Prostate gland (tissue), 2 donors: ENCODE measurements at regions of chr4 and their contacts with region 1.

Region 1: GRCh38 chr4:73662709-73663546 is 42.7 kb upstream of the RASSF6 start:
- DNase-seq: no peak
- H3K4me3 ChIP-seq: no peak overlapping the region
- H3K27ac ChIP-seq: no peak overlapping the region
- H3K4me1 ChIP-seq: no peaks in the 10 kb centered on the region
- H3K27me3 ChIP-seq: no peaks in the 10 kb centered on the region
- CTCF ChIP-seq: peak; percentile 28 to 73 (median 56)
- POLR2A ChIP-seq: no peak

Region 2: DNA sequence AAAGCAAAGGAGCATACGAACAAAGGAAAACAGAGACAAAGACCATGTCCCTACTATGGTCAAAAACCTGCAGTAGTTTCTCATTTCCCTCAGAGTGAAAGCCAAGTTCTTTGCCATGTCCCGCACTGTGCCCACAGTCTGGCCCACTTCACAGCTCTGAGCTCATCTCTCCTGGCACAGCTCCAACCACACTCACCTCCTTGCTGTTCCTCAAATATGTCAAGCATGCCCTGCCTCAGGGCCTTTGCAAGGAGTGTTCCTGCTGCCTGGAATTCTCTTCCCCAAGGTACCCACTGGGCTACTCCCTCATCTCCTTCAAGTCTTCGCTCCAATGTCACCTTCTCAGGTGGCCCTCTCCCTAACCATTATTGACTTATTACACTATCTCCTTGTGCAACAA is 665.5 kb before region 1 on chr4:
- intact Hi-C with region 1: no loop called
- DNase-seq: no peak
- H3K4me3 ChIP-seq: no peak overlapping the region
- H3K27ac ChIP-seq: no peak overlapping the region
- H3K4me1 ChIP-seq: no peaks in the 10 kb centered on the region
- H3K27me3 ChIP-seq: no peaks in the 10 kb centered on the region
- CTCF ChIP-seq: no peak
- POLR2A ChIP-seq: no peak

Region 3: GRCh38 chr4:73477176-73477575 is 185.8 kb before region 1 on chr4:
- intact Hi-C with region 1: no loop called
- DNase-seq: no peak
- H3K4me3 ChIP-seq: no peak overlapping the region
- H3K27ac ChIP-seq: no peak overlapping the region
- H3K4me1 ChIP-seq: no peaks in the 10 kb centered on the region
- H3K27me3 ChIP-seq: no peaks in the 10 kb centered on the region
- CTCF ChIP-seq: no peak
- POLR2A ChIP-seq: no peak

Region 4: GRCh38 chr4:73869130-73870050 is 206.5 kb after region 1 on chr4 and contains the start of gene CXCL1:
- intact Hi-C with region 1: loop called (anchors 10 kb)
- DNase-seq: peak; percentile 13
- H3K4me3 ChIP-seq: peak within 1 kb of the TSS; percentile 49 to 50
- H3K27ac ChIP-seq: peak within 1 kb of the TSS; percentile 20 to 55
- H3K4me1 ChIP-seq: no peaks in the 10 kb centered on the region
- H3K27me3 ChIP-seq: no peaks in the 10 kb centered on the region
- CTCF ChIP-seq: no peak
- POLR2A ChIP-seq: no peak
- total RNA-seq, gene CXCL1: 0.74 to 37.1 TPM

Region 5: GRCh38 chr4:73922766-73923630 is 260.1 kb after region 1 on chr4:
- intact Hi-C with region 1: loop called (anchors 5 kb)
- DNase-seq: no peak
- H3K4me3 ChIP-seq: no peak overlapping the region
- H3K27ac ChIP-seq: no peak overlapping the region
- H3K4me1 ChIP-seq: no peaks in the 10 kb centered on the region
- H3K27me3 ChIP-seq: no peaks in the 10 kb centered on the region
- CTCF ChIP-seq: peak in 3 of 4 experiments; percentile 22 to 57 (median 46)
- POLR2A ChIP-seq: no peak

Region 6: DNA sequence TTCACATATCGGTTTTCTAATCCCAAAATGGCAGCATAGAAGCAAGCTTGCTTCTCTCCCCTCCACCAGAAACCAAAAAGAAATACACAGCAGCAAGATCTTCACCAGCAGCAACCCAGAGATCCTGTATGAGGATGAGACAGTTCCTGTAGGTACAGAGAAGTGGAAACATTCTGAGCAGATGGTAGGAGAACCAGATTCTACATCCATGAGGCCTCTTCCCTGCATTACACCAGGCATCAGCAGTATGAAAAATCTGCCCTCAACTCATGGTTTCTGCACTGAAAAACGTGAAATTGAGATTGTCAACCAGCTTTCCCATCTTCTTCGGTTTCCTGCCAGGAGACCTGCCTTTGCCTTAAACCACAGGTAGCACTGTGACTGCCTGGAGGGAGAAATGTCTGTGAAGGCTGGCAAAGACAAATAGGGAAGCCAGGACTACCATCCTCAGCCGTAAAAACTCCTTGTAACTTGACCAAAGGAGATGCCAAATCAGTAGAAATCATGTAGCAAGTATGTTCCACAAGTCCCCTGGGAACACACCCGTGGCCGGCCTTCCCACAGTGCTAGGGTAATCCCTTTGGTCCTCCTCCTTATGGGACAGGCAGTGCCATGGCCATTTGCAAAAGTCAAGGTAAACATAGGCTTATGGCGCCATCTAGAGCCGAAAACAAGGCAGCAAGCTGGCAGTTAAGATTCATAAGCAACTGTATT is 471.0 kb after region 1 on chr4:
- intact Hi-C with region 1: loop called (anchors 5 kb)
- DNase-seq: peak; percentile 73
- H3K4me3 ChIP-seq: no peak overlapping the region
- H3K27ac ChIP-seq: no peak overlapping the region
- H3K4me1 ChIP-seq: no peaks in the 10 kb centered on the region
- H3K27me3 ChIP-seq: no peaks in the 10 kb centered on the region
- CTCF ChIP-seq: peak in 3 of 4 experiments; percentile 64 to 79 (median 77)
- POLR2A ChIP-seq: no peak